ENCODE measurements at regions of chr3 and their contacts with region 1.

Region 1: DNA sequence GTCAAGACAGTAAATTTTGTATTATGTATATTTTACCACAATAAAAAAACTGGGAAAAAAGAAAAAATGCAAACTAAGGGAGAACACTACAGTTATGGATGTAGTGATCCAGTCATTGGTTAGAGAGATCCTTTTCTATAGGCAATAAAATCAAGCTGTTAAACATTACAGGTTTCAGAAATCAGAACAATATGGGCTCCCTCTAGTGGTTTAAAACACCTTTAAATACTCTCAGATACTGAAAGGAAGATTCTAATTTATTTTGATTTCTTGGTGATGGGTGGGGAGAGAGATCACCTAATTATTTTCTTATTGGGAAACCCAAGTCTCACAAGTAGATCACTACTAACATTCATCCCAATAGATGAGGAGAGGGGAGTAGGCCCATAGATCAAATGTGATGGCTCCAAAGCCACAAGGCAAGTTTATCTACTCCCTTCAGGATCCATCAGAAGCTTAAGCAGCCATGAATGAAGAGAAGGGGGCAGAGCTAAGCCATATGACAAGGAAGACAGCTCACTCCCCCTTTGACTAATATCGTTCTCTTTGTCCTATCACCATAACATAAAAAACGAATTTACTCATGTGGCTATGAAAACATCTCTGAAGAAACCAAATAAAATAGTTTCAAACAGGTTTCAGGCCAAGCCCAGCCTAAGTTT is 118.6 kb downstream of the ANO10 start:
- DNase-seq: no peak
- H3K4me3 ChIP-seq: no peak overlapping the region
- H3K27ac ChIP-seq: no peak overlapping the region
- H3K4me1 ChIP-seq: peaks cover 0 to 4% (median 2%) of the 10 kb centered on the region in 4 experiments; a peak in 2 of 7 replicates
- H3K27me3 ChIP-seq: no peaks in the 10 kb centered on the region
- CTCF ChIP-seq: peak in 1 of 3 experiments; percentile 31; a peak in 2 of 4 replicates
- EP300 ChIP-seq: no peak
- POLR2A ChIP-seq: no peak
- RAD21 ChIP-seq: peak; percentile 51 to 62

Region 2: GRCh38 chr3:43162230-43163084 is 340.7 kb before region 1 on chr3:
- CTCF ChIA-PET with region 1: interaction called, 20 read pairs
- POLR2A ChIA-PET with region 1: no interaction called
- DNase-seq: no peak
- H3K4me3 ChIP-seq: no peak overlapping the region
- H3K27ac ChIP-seq: no peak overlapping the region
- H3K4me1 ChIP-seq: peaks cover 0 to 7% (median 3%) of the 10 kb centered on the region in 4 experiments; a peak in 3 of 7 replicates
- H3K27me3 ChIP-seq: no peaks in the 10 kb centered on the region
- CTCF ChIP-seq: peak in 1 of 3 experiments; percentile 35; a peak in 1 of 4 replicates
- EP300 ChIP-seq: no peak
- POLR2A ChIP-seq: no peak
- RAD21 ChIP-seq: peak; percentile 59 to 60

Region 3: DNA sequence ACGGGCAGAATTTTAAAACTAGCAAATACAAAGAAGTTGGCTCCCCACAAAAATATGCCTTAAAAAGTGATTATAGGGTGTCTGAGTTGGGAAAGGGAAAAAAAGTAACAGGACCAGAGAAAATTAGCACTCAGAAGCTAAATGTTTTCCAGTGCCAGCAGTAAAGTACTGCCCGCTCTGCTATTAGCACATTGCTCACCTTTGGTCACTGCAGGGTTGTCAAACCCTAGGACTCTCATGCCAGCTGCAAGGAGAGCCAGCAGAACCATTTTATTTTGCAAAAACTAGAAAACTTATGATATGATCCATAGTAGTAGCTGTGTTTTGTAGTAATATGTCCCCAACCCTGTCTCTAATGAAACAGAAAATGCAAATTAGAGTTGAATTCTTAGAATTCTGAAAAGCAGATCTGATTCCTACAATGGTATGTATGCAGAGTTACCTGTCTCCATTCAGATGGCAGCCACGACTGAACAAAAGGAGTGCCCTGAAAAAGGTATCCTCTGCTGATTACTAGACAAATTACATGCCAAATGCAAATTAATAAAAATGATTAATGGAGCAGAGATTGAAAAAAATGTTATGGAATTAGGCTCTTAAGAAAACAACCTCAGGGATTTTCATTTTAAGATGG is 66.6 kb before region 1 on chr3:
- CTCF ChIA-PET with region 1: interaction called, 11 read pairs
- POLR2A ChIA-PET with region 1: no interaction called
- DNase-seq: no peak
- H3K4me3 ChIP-seq: no peak overlapping the region
- H3K27ac ChIP-seq: no peak overlapping the region
- H3K4me1 ChIP-seq: peaks cover 0 to 9% (median 3%) of the 10 kb centered on the region in 4 experiments; a peak in 4 of 7 replicates
- H3K27me3 ChIP-seq: no peaks in the 10 kb centered on the region
- CTCF ChIP-seq: no peak
- EP300 ChIP-seq: no peak
- POLR2A ChIP-seq: no peak
- RAD21 ChIP-seq: no peak

Measured in H1 (cell line).